ENCODE measurements at regions of chr5 and their contacts with region 1.

Region 1: GRCh38 chr5:159764283-159765134 is 151.8 kb upstream of the ADRA1B start:
- DNase-seq: peak; percentile 94
- ATAC-seq: peak; percentile 82
- H3K4me3 ChIP-seq: no peak overlapping the region
- H3K27ac ChIP-seq: peak overlapping the region; percentile 95
- H3K4me1 ChIP-seq: peaks cover 19% of the 10 kb centered on the region
- H3K27me3 ChIP-seq: no peaks in the 10 kb centered on the region
- CTCF ChIP-seq: no peak
- POLR2A ChIP-seq: no peak
- RAD21 ChIP-seq: no peak

Region 2: DNA sequence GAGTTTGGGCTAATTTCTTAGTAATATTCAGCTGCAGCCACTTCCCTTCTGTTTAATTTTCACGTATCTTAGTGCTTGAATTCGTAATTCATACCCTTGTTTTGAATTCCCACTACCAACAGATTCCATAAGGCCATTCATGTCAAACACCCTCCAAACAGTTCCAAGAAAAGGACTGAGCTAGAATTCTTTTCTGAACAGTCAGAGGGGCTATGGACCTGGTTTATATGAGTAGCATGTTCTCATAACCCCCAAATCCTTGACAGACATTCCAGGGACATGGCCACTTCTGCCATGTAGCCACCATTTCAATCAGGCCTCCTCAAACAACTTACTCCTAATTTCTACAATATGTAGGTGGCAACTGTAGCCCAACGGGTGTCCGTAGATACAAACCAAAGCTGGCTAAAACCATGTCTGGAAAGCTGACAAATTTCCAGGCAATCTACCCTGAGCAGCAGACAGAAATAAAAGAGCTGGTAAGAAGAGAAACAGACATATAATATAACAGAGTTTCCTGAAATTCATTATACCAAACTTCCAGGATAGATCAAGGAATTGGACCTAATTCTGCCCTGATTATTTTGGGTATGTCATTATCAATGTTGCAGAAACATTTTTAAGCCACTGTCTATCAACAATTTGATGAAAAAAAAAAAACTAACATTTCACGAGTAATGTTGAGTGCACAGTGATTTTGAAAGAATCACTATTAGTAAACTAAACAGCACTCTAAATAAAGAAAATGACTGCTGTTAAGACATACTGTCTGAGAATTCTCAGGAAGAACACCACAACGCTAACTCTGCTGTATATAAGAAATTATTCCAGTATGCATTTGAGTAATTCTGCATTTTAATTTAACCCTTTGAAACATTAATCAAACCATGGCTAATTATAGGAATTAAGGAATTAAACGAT is 705.5 kb before region 1 on chr5:
- CTCF ChIA-PET with region 1: no interaction called
- POLR2A ChIA-PET with region 1: no interaction called
- dilution Hi-C with region 1: no loop called
- in situ Hi-C with region 1: no loop called
- intact Hi-C with region 1: loop called (anchors 5 kb)
- DNase-seq: no peak
- ATAC-seq: no peak
- H3K4me3 ChIP-seq: no peak overlapping the region
- H3K27ac ChIP-seq: no peak overlapping the region
- H3K4me1 ChIP-seq: peaks cover 4% of the 10 kb centered on the region; the same call in 1 of the 2 replicates
- H3K27me3 ChIP-seq: no peaks in the 10 kb centered on the region
- CTCF ChIP-seq: no peak
- POLR2A ChIP-seq: no peak
- RAD21 ChIP-seq: no peak

Region 3: GRCh38 chr5:159515909-159516415 is 248.5 kb before region 1 on chr5:
- CTCF ChIA-PET with region 1: no interaction called
- POLR2A ChIA-PET with region 1: no interaction called
- dilution Hi-C with region 1: no loop called
- in situ Hi-C with region 1: no loop called
- intact Hi-C with region 1: loop called (anchors 10 kb)
- DNase-seq: peak; percentile 42
- ATAC-seq: 0 out of 2 replicates have a peak, but pooled peaks have one; percentile 48
- H3K4me3 ChIP-seq: no peak overlapping the region
- H3K27ac ChIP-seq: no peak overlapping the region
- H3K4me1 ChIP-seq: peaks cover 5% of the 10 kb centered on the region
- H3K27me3 ChIP-seq: peaks cover 4% of the 10 kb centered on the region
- CTCF ChIP-seq: peak; percentile 69
- POLR2A ChIP-seq: no peak
- RAD21 ChIP-seq: peak; percentile 69

Region 4: DNA sequence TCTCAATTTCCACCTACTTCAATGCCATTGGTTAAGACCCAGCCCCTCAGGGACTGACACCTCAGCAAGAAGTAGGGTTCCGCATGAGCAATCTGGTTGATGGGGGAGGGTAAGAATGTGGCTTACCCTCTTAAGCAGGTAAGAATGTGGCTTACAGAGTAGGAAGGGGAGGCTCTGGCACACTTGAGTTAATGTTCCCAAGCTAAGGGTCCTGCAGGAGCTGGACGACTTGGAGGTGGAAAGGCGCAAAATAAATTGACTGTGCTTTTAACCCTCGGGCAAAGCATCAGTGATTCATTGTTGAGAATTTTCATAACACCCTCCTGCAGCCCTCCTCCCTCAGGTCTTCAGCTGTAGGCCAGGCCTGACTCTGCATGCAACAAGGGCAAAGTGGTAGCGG is 126.9 kb after region 1 on chr5:
- CTCF ChIA-PET with region 1: no interaction called
- POLR2A ChIA-PET with region 1: no interaction called
- dilution Hi-C with region 1: no loop called
- in situ Hi-C with region 1: no loop called
- intact Hi-C with region 1: loop called (anchors 5 kb)
- DNase-seq: no peak
- ATAC-seq: no peak
- H3K4me3 ChIP-seq: no peak overlapping the region
- H3K27ac ChIP-seq: no peak overlapping the region
- H3K4me1 ChIP-seq: peaks cover 11% of the 10 kb centered on the region
- H3K27me3 ChIP-seq: peaks cover 11% of the 10 kb centered on the region
- CTCF ChIP-seq: no peak
- POLR2A ChIP-seq: no peak
- RAD21 ChIP-seq: no peak

Measured in IMR-90 (cell line).